Activated CD8-positive, alpha-beta T cell treated with anti-CD3 and anti-CD28 coated beads, Interleukin-2, amount 10 ng/mL, durations not matched to agents 7 days and 5 days (primary cell): ENCODE measurements at regions of chr4 and their contacts with region 1.

Region 1: GRCh38 chr4:74320559-74321118 is 12.4 kb downstream of the EPGN start:
- DNase-seq: peak; percentile 36
- ATAC-seq: peak; percentile 63
- H3K4me3 Mint-ChIP-seq: no peak overlapping the region
- H3K27ac Mint-ChIP-seq: no peak overlapping the region
- H3K4me1 Mint-ChIP-seq: no peaks in the 10 kb centered on the region
- H3K27me3 Mint-ChIP-seq: peaks cover 13% of the 10 kb centered on the region

Region 2: GRCh38 chr4:74297539-74297938 is 23.1 kb before region 1 on chr4:
- CTCF ChIA-PET with region 1: no interaction called
- POLR2A ChIA-PET with region 1: no interaction called
- DNase-seq: no peak
- ATAC-seq: no peak
- H3K4me3 Mint-ChIP-seq: no peak overlapping the region
- H3K27ac Mint-ChIP-seq: no peak overlapping the region
- H3K4me1 Mint-ChIP-seq: no peaks in the 10 kb centered on the region
- H3K27me3 Mint-ChIP-seq: no peaks in the 10 kb centered on the region

Region 3: GRCh38 chr4:74531963-74532794 is 211.5 kb after region 1 on chr4:
- CTCF ChIA-PET with region 1: interaction called, 24 read pairs
- POLR2A ChIA-PET with region 1: no interaction called
- DNase-seq: no peak
- ATAC-seq: peak; percentile 51
- H3K4me3 Mint-ChIP-seq: no peak overlapping the region
- H3K27ac Mint-ChIP-seq: no peak overlapping the region
- H3K4me1 Mint-ChIP-seq: no peaks in the 10 kb centered on the region
- H3K27me3 Mint-ChIP-seq: peaks cover under 1% of the 10 kb centered on the region

Region 4: GRCh38 chr4:74675673-74676279 is 355.1 kb after region 1 on chr4:
- CTCF ChIA-PET with region 1: interaction called, 22 read pairs
- POLR2A ChIA-PET with region 1: no interaction called
- DNase-seq: peak; percentile 26
- ATAC-seq: peak; percentile 60
- H3K4me3 Mint-ChIP-seq: no peak overlapping the region
- H3K27ac Mint-ChIP-seq: no peak overlapping the region
- H3K4me1 Mint-ChIP-seq: no peaks in the 10 kb centered on the region
- H3K27me3 Mint-ChIP-seq: peaks cover 13% of the 10 kb centered on the region